Activated CD4-positive, alpha-beta T cell treated with anti-CD3 and anti-CD28 coated beads for 36 hours (primary cell): ENCODE measurements at regions of chr9 and their contacts with region 1.

Region 1: DNA sequence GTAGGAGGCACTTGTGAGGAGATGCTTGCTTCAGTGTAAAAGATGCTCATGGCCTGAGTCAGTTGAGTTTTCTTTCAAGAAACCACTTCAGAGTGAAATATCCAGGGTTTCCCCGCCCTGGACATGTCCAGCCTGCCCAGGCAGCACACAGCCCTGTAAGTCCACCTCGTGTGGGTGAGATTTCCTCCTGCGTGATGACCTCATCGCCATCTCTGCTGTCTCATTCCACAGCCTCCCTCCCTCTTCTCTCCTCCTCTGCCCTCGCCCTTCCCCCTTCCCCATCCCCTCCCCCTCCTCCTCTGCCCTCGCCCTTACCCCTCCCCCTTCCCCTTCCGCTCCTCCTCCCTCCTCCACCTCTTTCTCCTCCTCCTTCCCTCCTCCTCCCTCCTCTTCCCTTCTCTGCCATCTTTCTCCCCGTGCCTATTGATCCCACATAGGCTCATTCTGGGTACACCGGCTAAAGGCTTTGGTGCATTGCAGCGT is 34.0 kb upstream of the NCS1 start:
- DNase-seq: peak; percentile 45
- ATAC-seq: peak; percentile 11
- H3K4me3 Mint-ChIP-seq: no peak overlapping the region
- H3K27ac Mint-ChIP-seq: peak overlapping the region; percentile 73
- H3K4me1 Mint-ChIP-seq: peaks cover 57% of the 10 kb centered on the region
- H3K27me3 Mint-ChIP-seq: no peaks in the 10 kb centered on the region

Region 2: DNA sequence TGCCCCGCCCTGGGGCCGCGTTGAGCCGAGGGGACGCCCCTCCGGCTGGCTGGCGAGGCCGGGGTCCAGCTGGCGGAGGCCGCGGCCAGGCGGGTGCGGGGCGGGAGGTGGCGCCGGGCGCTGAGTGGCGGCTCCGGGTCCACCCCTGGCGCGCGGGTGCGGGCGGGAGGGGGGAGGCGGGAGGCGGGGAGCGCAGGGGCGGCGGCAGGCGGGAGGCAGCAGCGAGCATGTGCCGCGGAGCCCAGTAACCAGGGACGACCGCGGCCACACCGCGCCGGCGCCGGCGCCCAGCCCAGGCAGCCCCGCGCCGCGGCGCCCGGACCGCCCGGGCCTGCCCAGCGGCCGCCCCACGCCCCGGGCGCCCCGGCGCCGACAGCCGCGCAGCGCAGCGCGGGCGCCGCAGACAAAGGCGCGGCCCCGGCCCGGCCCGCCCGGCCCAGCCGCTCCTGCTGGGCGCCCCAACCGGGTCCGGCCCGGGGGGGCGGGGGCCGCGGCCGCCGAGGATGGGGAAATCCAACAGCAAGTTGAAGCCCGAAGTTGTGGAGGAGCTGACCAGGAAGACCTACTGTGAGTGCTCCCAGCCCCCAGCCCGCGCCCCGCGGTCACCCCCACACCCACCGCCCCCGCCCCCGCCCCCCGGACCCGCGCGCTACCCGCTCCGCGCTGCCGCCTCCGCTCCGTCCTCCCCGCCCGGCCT is 34.1 kb after region 1 on chr9 and contains the start of gene NCS1:
- CTCF ChIA-PET with region 1: no interaction called
- POLR2A ChIA-PET with region 1: no interaction called
- intact Hi-C with region 1: loop called in 1 of 2 experiments (anchors 2 kb)
- DNase-seq: peak; percentile 74
- ATAC-seq: peak; percentile 70
- H3K4me3 Mint-ChIP-seq: peak within 1 kb of the TSS; percentile 73
- H3K27ac Mint-ChIP-seq: peak within 1 kb of the TSS; percentile 51
- H3K4me1 Mint-ChIP-seq: peaks cover 3% of the 10 kb centered on the region
- H3K27me3 Mint-ChIP-seq: peaks cover 13% of the 10 kb centered on the region
- total RNA-seq, gene NCS1: 24.8 to 25.2 TPM

Region 3: GRCh38 chr9:130260816-130261765 is 122.9 kb after region 1 on chr9:
- CTCF ChIA-PET with region 1: no interaction called
- POLR2A ChIA-PET with region 1: no interaction called
- intact Hi-C with region 1: no loop called
- DNase-seq: no peak
- ATAC-seq: no peak
- H3K4me3 Mint-ChIP-seq: no peak overlapping the region
- H3K27ac Mint-ChIP-seq: no peak overlapping the region
- H3K4me1 Mint-ChIP-seq: no peaks in the 10 kb centered on the region
- H3K27me3 Mint-ChIP-seq: peaks cover 41% of the 10 kb centered on the region